PC-9 (cell line): ENCODE measurements at regions of chr19 and their contacts with region 1.

Region 1: GRCh38 chr19:47093841-47094240 is 19.7 kb downstream of the ZC3H4 start:
- DNase-seq: no peak
- H3K4me3 ChIP-seq: no peak overlapping the region
- H3K27ac ChIP-seq: no peak overlapping the region
- H3K4me1 ChIP-seq: peaks cover 40% of the 10 kb centered on the region
- H3K27me3 ChIP-seq: no peaks in the 10 kb centered on the region
- CTCF ChIP-seq: no peak

Region 2: DNA sequence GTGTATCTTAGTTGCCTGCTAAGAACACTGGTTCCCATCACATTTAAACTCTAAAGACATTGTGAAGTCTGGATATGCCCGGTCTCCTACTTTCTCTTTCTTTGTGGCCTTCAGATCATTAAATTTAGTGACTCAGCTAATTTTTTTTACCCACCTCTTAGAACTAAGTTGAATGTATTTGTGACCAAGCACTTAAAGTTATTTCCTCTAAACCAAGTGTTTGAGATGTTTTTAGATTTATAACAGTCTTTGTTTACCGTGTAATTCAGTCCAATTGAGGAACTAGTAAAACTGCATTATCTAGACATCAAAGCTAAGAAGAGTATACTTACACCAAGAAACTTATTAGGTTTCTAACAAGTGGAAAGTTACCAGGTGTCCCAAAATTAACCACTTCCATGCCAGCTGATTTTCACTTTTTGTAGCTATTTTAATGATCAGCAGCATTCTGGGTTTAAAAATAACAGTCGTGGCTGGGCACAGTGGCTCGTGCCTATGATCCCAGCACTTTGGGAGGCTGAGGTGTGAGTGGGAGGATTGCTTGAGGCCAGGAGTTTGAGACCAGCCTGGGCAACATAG is 179.9 kb before region 1 on chr19:
- CTCF ChIA-PET with region 1: no interaction called
- POLR2A ChIA-PET with region 1: interaction called, 11 read pairs
- intact Hi-C with region 1: no loop called
- DNase-seq: peak in 1 of 2 experiments; percentile 91
- H3K4me3 ChIP-seq: peak overlapping the region; percentile 29; the same call in 1 of the 2 replicates
- H3K27ac ChIP-seq: peak overlapping the region; percentile 82
- H3K4me1 ChIP-seq: peaks cover 55% of the 10 kb centered on the region
- H3K27me3 ChIP-seq: no peaks in the 10 kb centered on the region
- CTCF ChIP-seq: no peak

Region 3: GRCh38 chr19:47176627-47177090 is 82.8 kb after region 1 on chr19:
- CTCF ChIA-PET with region 1: no interaction called
- POLR2A ChIA-PET with region 1: no interaction called
- intact Hi-C with region 1: no loop called
- DNase-seq: no peak
- H3K4me3 ChIP-seq: no peak overlapping the region
- H3K27ac ChIP-seq: no peak overlapping the region
- H3K4me1 ChIP-seq: no peaks in the 10 kb centered on the region
- H3K27me3 ChIP-seq: no peaks in the 10 kb centered on the region
- CTCF ChIP-seq: no peak